CD8-positive, alpha-beta T cell (primary cell): ENCODE measurements at regions of chr21 and their contacts with region 1.

Region 1: DNA sequence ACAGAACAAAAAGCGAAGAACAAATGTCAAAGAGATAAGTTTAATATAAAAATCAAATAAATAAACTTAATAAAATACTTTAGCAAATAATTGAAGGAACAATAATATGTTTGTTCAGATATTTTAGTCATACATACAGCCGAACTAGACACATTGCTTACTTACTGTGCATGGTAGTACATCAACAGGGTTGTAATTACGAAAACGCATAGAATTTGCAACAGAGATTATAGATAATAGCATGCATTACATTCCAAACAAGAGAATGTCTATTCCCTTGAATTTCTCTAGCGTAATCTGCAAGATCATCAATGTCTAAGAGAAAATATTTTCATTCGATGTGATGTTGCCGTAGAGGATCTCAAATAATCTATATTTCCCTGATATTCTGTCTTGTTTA is 359.6 kb downstream of the NCAM2 start:
- DNase-seq: no peak
- ATAC-seq: no peak
- H3K4me3 ChIP-seq: no peak overlapping the region
- H3K4me3 Mint-ChIP-seq: no peak overlapping the region
- H3K27ac ChIP-seq: no peak overlapping the region
- H3K27ac Mint-ChIP-seq: no peak overlapping the region
- H3K4me1 ChIP-seq: no peaks in the 10 kb centered on the region
- H3K4me1 Mint-ChIP-seq: no peaks in the 10 kb centered on the region
- H3K27me3 ChIP-seq: no peaks in the 10 kb centered on the region
- H3K27me3 Mint-ChIP-seq: no peaks in the 10 kb centered on the region
- CTCF ChIP-seq: no peak

Region 2: GRCh38 chr21:21309510-21309909 is 48.3 kb before region 1 on chr21:
- CTCF ChIA-PET with region 1: no interaction called
- POLR2A ChIA-PET with region 1: no interaction called
- intact Hi-C with region 1: loop called in 1 of 2 experiments (anchors 2 kb)
- DNase-seq: no peak
- ATAC-seq: no peak
- H3K4me3 ChIP-seq: no peak overlapping the region
- H3K4me3 Mint-ChIP-seq: no peak overlapping the region
- H3K27ac ChIP-seq: no peak overlapping the region
- H3K27ac Mint-ChIP-seq: no peak overlapping the region
- H3K4me1 ChIP-seq: no peaks in the 10 kb centered on the region
- H3K4me1 Mint-ChIP-seq: no peaks in the 10 kb centered on the region
- H3K27me3 ChIP-seq: no peaks in the 10 kb centered on the region
- H3K27me3 Mint-ChIP-seq: no peaks in the 10 kb centered on the region
- CTCF ChIP-seq: no peak

Region 3: DNA sequence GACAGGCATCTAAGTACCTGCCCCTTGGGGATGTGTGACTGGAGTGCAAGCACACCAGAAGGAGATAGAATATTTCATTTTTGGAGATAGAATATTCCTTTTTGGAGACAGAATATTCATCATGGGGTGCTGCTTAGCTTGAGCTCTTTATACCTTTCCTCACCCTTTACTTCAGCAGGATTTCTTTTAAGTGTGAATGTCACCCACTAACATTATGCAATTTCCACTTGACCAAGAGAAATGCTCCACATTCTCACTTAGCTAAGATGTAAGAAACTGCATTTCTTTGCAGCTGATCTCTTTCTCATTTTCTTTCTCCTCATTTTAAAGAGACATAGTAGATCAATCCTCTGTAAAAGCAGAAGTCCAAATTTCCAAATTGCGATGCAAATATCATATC is 77.1 kb after region 1 on chr21:
- CTCF ChIA-PET with region 1: no interaction called
- POLR2A ChIA-PET with region 1: no interaction called
- intact Hi-C with region 1: no loop called
- DNase-seq: no peak
- ATAC-seq: no peak
- H3K4me3 ChIP-seq: no peak overlapping the region
- H3K4me3 Mint-ChIP-seq: no peak overlapping the region
- H3K27ac ChIP-seq: no peak overlapping the region
- H3K27ac Mint-ChIP-seq: no peak overlapping the region
- H3K4me1 ChIP-seq: no peaks in the 10 kb centered on the region
- H3K4me1 Mint-ChIP-seq: no peaks in the 10 kb centered on the region
- H3K27me3 ChIP-seq: no peaks in the 10 kb centered on the region
- H3K27me3 Mint-ChIP-seq: no peaks in the 10 kb centered on the region
- CTCF ChIP-seq: no peak